ENCODE measurements at regions of chrX and their contacts with region 1.

Region 1: GRCh38 chrX:77785486-77786364 is at the start of gene ATRX:
- DNase-seq: peak; percentile 82
- H3K4me3 Mint-ChIP-seq: peak within 1 kb of the TSS; percentile 99
- H3K27ac Mint-ChIP-seq: peak within 1 kb of the TSS; percentile 100
- H3K4me1 Mint-ChIP-seq: peaks cover 17% of the 10 kb centered on the region
- H3K27me3 Mint-ChIP-seq: peaks cover 2% of the 10 kb centered on the region
- total RNA-seq, gene ATRX: 56.8 to 60.4 TPM

Region 2: DNA sequence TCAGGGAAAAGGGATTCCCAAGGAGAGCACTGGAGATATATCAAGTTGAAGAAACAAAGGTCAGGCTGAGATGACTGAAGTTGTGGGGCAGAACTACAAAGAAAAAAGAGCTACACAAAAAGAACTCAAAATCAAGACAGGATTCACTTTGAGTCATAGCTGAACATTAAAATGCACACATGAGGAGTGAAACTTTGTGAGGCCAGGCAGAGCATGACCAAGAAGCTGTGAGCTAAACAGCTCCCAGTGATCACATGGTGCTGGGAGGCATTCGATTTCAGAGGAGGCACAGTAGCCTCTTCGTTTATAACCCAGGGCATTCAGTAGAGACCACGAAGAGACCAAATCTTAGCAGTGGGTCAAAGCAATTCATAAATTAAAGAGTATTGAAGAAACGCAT is 145.0 kb before region 1 on chrX:
- CTCF ChIA-PET with region 1: no interaction called
- POLR2A ChIA-PET with region 1: no interaction called
- intact Hi-C with region 1: loop called (anchors 10 kb)
- DNase-seq: peak; percentile 39
- H3K4me3 Mint-ChIP-seq: no peak overlapping the region
- H3K27ac Mint-ChIP-seq: peak overlapping the region; percentile 59
- H3K4me1 Mint-ChIP-seq: peaks cover 7% of the 10 kb centered on the region
- H3K27me3 Mint-ChIP-seq: no peaks in the 10 kb centered on the region

Region 3: DNA sequence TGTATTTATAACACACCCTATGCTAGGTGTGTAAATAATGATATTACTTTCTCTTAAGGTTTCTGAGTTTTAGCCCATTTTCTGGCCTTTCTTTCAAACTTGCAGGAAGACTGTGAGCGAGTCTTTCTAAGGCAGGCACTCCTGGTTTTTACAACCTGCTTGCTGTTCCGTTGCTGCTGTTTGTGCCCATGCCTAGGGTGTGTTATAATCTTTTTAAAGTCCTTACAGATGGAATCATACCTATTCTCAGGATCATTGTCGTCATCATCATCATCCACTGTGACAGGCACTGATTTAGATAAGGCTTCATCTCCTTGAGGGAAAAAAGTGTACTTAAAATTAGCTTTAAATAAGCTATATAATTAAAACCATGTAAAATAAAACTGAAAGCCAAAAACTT is 109.7 kb before region 1 on chrX:
- CTCF ChIA-PET with region 1: no interaction called
- POLR2A ChIA-PET with region 1: no interaction called
- intact Hi-C with region 1: loop called (anchors 5 kb)
- DNase-seq: no peak
- H3K4me3 Mint-ChIP-seq: no peak overlapping the region
- H3K27ac Mint-ChIP-seq: no peak overlapping the region
- H3K4me1 Mint-ChIP-seq: peaks cover 4% of the 10 kb centered on the region
- H3K27me3 Mint-ChIP-seq: no peaks in the 10 kb centered on the region

Region 4: DNA sequence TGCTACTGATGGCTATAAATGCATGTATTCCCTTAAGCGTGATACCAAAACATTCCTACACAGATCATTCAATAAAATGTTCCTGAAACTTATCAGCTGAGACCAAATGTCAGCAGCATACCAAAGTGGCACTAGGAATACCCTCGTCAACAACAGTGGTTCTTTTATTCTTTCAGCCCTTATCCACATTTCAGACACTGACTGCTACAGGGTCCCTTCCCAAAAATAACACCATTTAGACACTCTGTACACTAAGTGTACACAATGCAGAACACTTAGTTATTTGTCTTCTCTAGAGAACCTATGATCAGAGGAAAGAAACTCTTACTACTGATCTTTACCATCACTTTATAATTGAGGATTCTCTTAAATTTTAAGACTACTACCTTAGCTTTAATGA is 93.8 kb before region 1 on chrX:
- CTCF ChIA-PET with region 1: no interaction called
- POLR2A ChIA-PET with region 1: no interaction called
- intact Hi-C with region 1: no loop called
- DNase-seq: no peak
- H3K4me3 Mint-ChIP-seq: no peak overlapping the region
- H3K27ac Mint-ChIP-seq: no peak overlapping the region
- H3K4me1 Mint-ChIP-seq: peaks cover 14% of the 10 kb centered on the region
- H3K27me3 Mint-ChIP-seq: no peaks in the 10 kb centered on the region

Region 5: GRCh38 chrX:77962068-77962902 is 176.6 kb after region 1 on chrX:
- CTCF ChIA-PET with region 1: no interaction called
- POLR2A ChIA-PET with region 1: no interaction called
- intact Hi-C with region 1: loop called (anchors 5 kb)
- DNase-seq: peak; percentile 14
- H3K4me3 Mint-ChIP-seq: peak overlapping the region; percentile 71
- H3K27ac Mint-ChIP-seq: peak overlapping the region; percentile 96
- H3K4me1 Mint-ChIP-seq: peaks cover 43% of the 10 kb centered on the region
- H3K27me3 Mint-ChIP-seq: no peaks in the 10 kb centered on the region